MCF 10A (cell line): ENCODE measurements at regions of chr18 and their contacts with region 1.

Region 1: GRCh38 chr18:51614033-51614432 is 416.6 kb upstream of the MEX3C start:
- DNase-seq: peak; percentile 99
- H3K4me3 Mint-ChIP-seq: no peak overlapping the region
- H3K27ac Mint-ChIP-seq: peak overlapping the region; percentile 75
- H3K4me1 Mint-ChIP-seq: peaks cover 45% of the 10 kb centered on the region
- H3K27me3 Mint-ChIP-seq: no peaks in the 10 kb centered on the region
- CTCF ChIP-seq: no peak

Region 2: GRCh38 chr18:51135795-51136194 is 478.2 kb before region 1 on chr18:
- CTCF ChIA-PET with region 1: interaction called, 3 read pairs
- POLR2A ChIA-PET with region 1: interaction called, 3 read pairs
- intact Hi-C with region 1: loop called (anchors 10 kb)
- DNase-seq: peak; percentile 48
- H3K4me3 Mint-ChIP-seq: peak overlapping the region; percentile 85
- H3K27ac Mint-ChIP-seq: peak overlapping the region; percentile 97
- H3K4me1 Mint-ChIP-seq: peaks cover 45% of the 10 kb centered on the region
- H3K27me3 Mint-ChIP-seq: no peaks in the 10 kb centered on the region
- CTCF ChIP-seq: no peak

Region 3: DNA sequence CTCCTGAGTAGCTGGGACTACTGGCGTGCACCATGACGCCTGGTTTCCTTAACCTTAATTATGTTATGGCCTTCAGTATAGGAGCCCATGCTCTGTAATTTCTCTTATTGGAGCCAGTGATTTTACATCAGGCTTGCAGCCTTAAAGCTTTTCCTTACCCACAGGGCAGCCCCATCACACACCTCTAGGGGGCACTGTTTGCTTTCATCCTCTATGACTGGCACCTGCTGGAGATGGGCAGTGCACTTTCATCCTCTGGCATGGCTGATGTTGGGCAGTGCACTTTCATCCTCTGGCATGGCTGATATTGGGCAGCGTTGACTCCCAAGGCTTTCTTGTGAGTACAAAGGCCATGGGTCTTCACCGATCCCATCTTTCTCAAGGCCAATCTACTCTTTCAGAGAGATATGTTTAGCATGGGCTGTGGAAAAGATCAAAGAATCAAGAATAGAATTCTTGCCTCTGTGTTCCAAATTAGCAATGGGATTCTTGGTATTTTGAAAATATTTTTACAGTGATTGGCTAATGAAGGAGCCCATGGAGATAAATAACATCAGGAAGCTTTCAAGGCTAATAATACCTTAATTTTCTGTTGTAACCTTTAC is 335.9 kb before region 1 on chr18:
- CTCF ChIA-PET with region 1: interaction called, 4 read pairs
- POLR2A ChIA-PET with region 1: no interaction called
- intact Hi-C with region 1: loop called (anchors 1 kb)
- DNase-seq: peak; percentile 87
- H3K4me3 Mint-ChIP-seq: no peak overlapping the region
- H3K27ac Mint-ChIP-seq: no peak overlapping the region
- H3K4me1 Mint-ChIP-seq: no peaks in the 10 kb centered on the region
- H3K27me3 Mint-ChIP-seq: no peaks in the 10 kb centered on the region
- CTCF ChIP-seq: peak; percentile 87

Region 4: DNA sequence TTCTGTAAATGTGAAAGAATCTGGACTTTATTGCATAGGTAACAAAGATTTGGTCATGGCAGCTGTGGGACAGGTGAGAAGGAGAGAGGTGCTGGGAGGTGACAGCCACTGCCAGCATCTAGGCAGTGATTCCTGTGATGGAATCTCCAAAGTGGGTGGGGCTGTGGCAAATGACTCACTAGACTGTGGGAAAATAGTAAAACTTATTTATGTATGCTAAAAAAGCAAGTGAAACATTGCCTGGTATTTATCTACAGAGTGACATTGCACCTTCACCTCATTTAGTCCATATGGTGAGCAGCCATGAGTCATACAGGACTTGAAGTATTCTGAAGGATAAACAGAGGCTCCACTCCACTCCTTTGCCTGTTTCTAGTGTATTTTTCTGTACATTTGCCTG is 271.2 kb before region 1 on chr18:
- CTCF ChIA-PET with region 1: no interaction called
- POLR2A ChIA-PET with region 1: no interaction called
- intact Hi-C with region 1: loop called (anchors 10 kb)
- DNase-seq: peak; percentile 90
- H3K4me3 Mint-ChIP-seq: no peak overlapping the region
- H3K27ac Mint-ChIP-seq: no peak overlapping the region
- H3K4me1 Mint-ChIP-seq: peaks cover 15% of the 10 kb centered on the region
- H3K27me3 Mint-ChIP-seq: no peaks in the 10 kb centered on the region
- CTCF ChIP-seq: no peak

Region 5: GRCh38 chr18:51425889-51426288 is 188.1 kb before region 1 on chr18:
- CTCF ChIA-PET with region 1: no interaction called
- POLR2A ChIA-PET with region 1: no interaction called
- intact Hi-C with region 1: no loop called
- DNase-seq: no peak
- H3K4me3 Mint-ChIP-seq: no peak overlapping the region
- H3K27ac Mint-ChIP-seq: no peak overlapping the region
- H3K4me1 Mint-ChIP-seq: peaks cover 18% of the 10 kb centered on the region
- H3K27me3 Mint-ChIP-seq: no peaks in the 10 kb centered on the region
- CTCF ChIP-seq: no peak

Region 6: GRCh38 chr18:51588616-51589015 is 25.4 kb before region 1 on chr18:
- CTCF ChIA-PET with region 1: interaction called, 3 read pairs
- POLR2A ChIA-PET with region 1: interaction called, 7 read pairs
- intact Hi-C with region 1: loop called (anchors 2 kb)
- DNase-seq: peak; percentile 42
- H3K4me3 Mint-ChIP-seq: no peak overlapping the region
- H3K27ac Mint-ChIP-seq: no peak overlapping the region
- H3K4me1 Mint-ChIP-seq: peaks cover 5% of the 10 kb centered on the region
- H3K27me3 Mint-ChIP-seq: no peaks in the 10 kb centered on the region
- CTCF ChIP-seq: no peak

Region 7: DNA sequence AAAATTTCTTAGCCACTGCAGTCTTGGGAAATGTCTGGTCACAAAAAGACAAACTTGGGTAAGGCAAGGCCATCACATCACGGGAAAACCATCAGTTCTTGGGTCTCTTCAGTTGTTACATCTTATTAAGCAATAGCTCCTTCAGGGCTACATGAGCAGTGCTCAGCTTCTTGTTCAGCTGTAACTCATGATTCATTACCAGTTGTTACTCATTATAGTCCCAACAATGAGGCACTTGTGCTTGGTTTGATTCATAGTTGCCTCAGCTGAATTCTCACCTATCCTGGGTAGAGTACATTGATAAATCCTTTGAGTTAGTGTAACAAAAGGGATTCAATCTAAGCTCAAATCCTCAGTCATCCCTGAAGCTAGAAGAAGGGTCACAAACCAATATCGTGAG is 623.5 kb after region 1 on chr18:
- CTCF ChIA-PET with region 1: no interaction called
- POLR2A ChIA-PET with region 1: no interaction called
- intact Hi-C with region 1: loop called (anchors 2 kb)
- DNase-seq: peak; percentile 56
- H3K4me3 Mint-ChIP-seq: no peak overlapping the region
- H3K27ac Mint-ChIP-seq: no peak overlapping the region
- H3K4me1 Mint-ChIP-seq: peaks cover 6% of the 10 kb centered on the region
- H3K27me3 Mint-ChIP-seq: no peaks in the 10 kb centered on the region
- CTCF ChIP-seq: no peak